WTC11 (cell line): ENCODE measurements at regions of chr14 and their contacts with region 1.

Region 1: GRCh38 chr14:52106840-52107239 is 38.0 kb upstream of the NID2 start:
- DNase-seq: no peak
- ATAC-seq: no peak
- H3K4me3 Mint-ChIP-seq: no peak overlapping the region
- H3K27ac Mint-ChIP-seq: no peak overlapping the region
- H3K4me1 Mint-ChIP-seq: no peaks in the 10 kb centered on the region
- H3K27me3 Mint-ChIP-seq: no peaks in the 10 kb centered on the region
- CTCF ChIP-seq: no peak

Region 2: DNA sequence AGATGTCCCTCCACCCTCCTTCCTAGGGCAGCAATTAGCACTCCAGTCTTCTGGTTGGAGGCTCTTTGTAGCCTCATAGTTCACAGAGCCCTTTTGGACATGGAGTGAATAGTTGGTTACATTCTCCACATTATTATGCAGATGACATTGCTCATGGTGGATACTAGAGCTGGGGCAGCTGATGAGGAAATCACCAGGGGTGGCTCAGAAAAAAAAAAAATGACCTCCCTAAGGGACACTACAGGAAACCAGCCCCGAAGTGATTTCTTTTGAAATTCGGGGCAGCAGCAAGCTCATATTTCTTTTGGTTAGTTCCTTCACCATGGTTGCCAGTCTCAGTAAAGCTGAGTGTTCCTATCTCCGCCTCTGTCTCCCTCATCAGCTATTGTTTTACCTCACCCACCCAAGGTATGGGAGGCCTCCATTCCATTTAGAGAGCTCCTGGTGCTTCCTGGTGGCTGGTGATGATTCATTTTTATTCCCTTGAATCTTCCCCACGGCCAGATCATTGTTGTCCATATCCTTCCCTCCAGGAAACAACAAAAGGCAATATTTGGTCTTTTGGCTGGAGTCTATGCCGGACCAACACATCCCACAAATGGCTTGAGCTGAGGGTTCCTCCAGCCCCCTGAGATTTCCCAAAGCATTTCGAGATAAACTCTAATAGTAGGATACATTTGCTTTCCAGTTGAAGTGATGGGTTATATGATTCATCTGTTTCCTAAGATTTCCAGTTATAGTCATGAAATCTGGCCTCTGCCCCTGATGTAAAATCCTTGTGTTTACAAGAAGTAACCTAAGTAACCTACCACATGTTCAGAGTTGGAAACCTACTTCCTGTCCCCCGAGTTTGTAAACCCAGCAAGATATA is 18.2 kb after region 1 on chr14:
- CTCF ChIA-PET with region 1: no interaction called
- POLR2A ChIA-PET with region 1: no interaction called
- DNase-seq: no peak
- ATAC-seq: peak; percentile 86
- H3K4me3 Mint-ChIP-seq: no peak overlapping the region
- H3K27ac Mint-ChIP-seq: no peak overlapping the region; the same call in 1 of the 2 replicates
- H3K4me1 Mint-ChIP-seq: peaks cover 31% of the 10 kb centered on the region
- H3K27me3 Mint-ChIP-seq: no peaks in the 10 kb centered on the region
- CTCF ChIP-seq: no peak

Region 3: DNA sequence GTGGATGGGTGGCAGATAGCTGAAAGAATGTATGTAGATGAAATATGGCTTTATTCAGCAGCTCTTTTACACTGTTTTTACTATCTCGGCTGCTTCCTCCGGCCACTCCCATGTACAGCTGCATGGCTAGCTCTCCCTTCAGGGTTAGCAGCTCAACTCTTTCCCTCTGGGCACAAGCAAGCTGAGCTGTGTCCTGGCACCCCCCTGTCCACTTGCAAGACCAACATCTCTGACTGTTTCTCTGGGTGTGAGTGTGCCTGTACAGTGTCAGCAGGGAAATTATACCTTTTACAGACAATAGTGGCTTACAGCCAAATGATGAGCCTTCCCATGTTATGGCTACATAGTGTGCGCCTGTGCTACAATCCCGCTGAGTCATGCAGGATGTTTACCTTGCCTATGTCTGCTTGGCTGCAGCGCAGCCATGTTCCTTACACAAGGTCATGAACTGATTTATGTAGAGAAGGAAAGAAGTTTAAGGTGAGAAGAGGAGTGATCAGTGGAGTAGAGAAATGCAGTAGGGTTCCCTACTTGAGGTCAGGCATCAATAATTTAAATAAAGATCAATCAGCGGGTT is 1172.2 kb after region 1 on chr14:
- CTCF ChIA-PET with region 1: no interaction called
- POLR2A ChIA-PET with region 1: interaction called, 15 read pairs
- DNase-seq: no peak
- ATAC-seq: no peak
- H3K4me3 Mint-ChIP-seq: no peak overlapping the region
- H3K27ac Mint-ChIP-seq: no peak overlapping the region
- H3K4me1 Mint-ChIP-seq: no peaks in the 10 kb centered on the region
- H3K27me3 Mint-ChIP-seq: no peaks in the 10 kb centered on the region
- CTCF ChIP-seq: no peak